CD14-positive monocyte (primary cell): ENCODE measurements at regions of chr2 and their contacts with region 1.

Region 1: GRCh38 chr2:74979844-74980243 is 21.4 kb downstream of the POLE4 start:
- DNase-seq: peak; percentile 29 to 42 (median 34)
- H3K4me3 ChIP-seq: no peak overlapping the region
- H3K4me3 Mint-ChIP-seq: no peak overlapping the region
- H3K27ac ChIP-seq: no peak overlapping the region
- H3K27ac Mint-ChIP-seq: no peak overlapping the region
- H3K4me1 ChIP-seq: peaks cover 7 to 11% of the 10 kb centered on the region in 2 donors
- H3K4me1 Mint-ChIP-seq: peaks cover 9% of the 10 kb centered on the region
- H3K27me3 ChIP-seq: no peaks in the 10 kb centered on the region
- H3K27me3 Mint-ChIP-seq: no peaks in the 10 kb centered on the region
- CTCF ChIP-seq: no peak

Region 2: GRCh38 chr2:74608991-74609390 is 370.9 kb before region 1 on chr2:
- intact Hi-C with region 1: no loop called
- DNase-seq: no peak
- H3K4me3 ChIP-seq: no peak overlapping the region
- H3K4me3 Mint-ChIP-seq: no peak overlapping the region
- H3K27ac ChIP-seq: no peak overlapping the region
- H3K27ac Mint-ChIP-seq: no peak overlapping the region
- H3K4me1 ChIP-seq: no peaks in the 10 kb centered on the region
- H3K4me1 Mint-ChIP-seq: no peaks in the 10 kb centered on the region
- H3K27me3 ChIP-seq: peaks cover 0 to 2% of the 10 kb centered on the region in 2 donors
- H3K27me3 Mint-ChIP-seq: peaks cover 2 to 21% (median 18%) of the 10 kb centered on the region in 3 donors
- CTCF ChIP-seq: no peak

Region 3: GRCh38 chr2:75018162-75018561 is 38.3 kb after region 1 on chr2:
- intact Hi-C with region 1: loop called in 1 of 2 experiments (anchors 2 kb)
- DNase-seq: peak; percentile 62 to 74 (median 66)
- H3K4me3 ChIP-seq: peak overlapping the region in 1 of 3 experiments; percentile 13
- H3K4me3 Mint-ChIP-seq: no peak overlapping the region
- H3K27ac ChIP-seq: peak overlapping the region in 1 of 2 donors; percentile 17
- H3K27ac Mint-ChIP-seq: peak overlapping the region in 4 of 7 donors; percentile 19 to 82 (median 58)
- H3K4me1 ChIP-seq: peaks cover 14 to 18% of the 10 kb centered on the region in 2 donors
- H3K4me1 Mint-ChIP-seq: peaks cover 17% of the 10 kb centered on the region
- H3K27me3 ChIP-seq: no peaks in the 10 kb centered on the region
- H3K27me3 Mint-ChIP-seq: peaks cover 2 to 10% (median 6%) of the 10 kb centered on the region in 3 donors
- CTCF ChIP-seq: no peak